ENCODE measurements at regions of chr2 and their contacts with region 1.

Region 1: DNA sequence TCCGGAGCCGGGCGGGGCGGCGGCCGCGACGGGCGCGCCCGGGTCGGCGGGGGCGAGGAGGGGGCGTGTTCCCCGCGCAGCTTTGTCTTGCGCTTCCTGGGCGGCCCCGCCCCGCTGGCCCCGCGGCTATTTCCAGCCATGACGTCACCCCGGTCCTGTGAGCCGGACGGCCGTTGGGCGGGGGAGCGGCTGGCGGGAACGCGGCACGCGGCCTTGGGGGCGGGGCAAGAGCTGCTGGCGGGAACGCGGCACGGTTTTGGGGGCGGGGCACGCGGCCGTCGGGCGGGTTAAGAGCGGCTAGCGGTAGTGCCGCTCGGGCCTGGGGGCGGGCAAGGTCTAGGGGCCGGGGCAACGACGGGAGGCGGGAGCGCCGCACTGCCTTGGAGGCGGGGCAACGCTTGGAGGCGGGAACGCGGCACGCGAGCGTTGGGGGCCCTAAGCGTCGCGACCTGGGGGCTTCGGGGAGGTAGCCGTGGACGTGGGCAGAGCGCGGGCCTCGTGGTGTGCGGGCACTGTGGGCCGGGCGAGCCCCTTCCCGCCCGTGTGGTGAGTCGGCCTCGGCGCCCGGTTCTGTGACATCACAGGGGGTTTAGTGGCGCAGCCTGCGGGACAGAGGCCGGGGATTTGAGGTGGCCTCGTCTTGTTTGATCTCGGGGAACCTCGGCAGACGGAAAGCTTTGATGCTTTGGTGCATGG is 704 bp downstream of the KLF11 start:
- DNase-seq: peak; percentile 88
- ATAC-seq: peak; percentile 68
- H3K4me3 Mint-ChIP-seq: peak overlapping the region; percentile 76
- H3K27ac Mint-ChIP-seq: peak overlapping the region; percentile 72
- H3K4me1 Mint-ChIP-seq: peaks cover 26% of the 10 kb centered on the region
- H3K27me3 Mint-ChIP-seq: no peaks in the 10 kb centered on the region
- CTCF ChIP-seq: no peak

Region 2: DNA sequence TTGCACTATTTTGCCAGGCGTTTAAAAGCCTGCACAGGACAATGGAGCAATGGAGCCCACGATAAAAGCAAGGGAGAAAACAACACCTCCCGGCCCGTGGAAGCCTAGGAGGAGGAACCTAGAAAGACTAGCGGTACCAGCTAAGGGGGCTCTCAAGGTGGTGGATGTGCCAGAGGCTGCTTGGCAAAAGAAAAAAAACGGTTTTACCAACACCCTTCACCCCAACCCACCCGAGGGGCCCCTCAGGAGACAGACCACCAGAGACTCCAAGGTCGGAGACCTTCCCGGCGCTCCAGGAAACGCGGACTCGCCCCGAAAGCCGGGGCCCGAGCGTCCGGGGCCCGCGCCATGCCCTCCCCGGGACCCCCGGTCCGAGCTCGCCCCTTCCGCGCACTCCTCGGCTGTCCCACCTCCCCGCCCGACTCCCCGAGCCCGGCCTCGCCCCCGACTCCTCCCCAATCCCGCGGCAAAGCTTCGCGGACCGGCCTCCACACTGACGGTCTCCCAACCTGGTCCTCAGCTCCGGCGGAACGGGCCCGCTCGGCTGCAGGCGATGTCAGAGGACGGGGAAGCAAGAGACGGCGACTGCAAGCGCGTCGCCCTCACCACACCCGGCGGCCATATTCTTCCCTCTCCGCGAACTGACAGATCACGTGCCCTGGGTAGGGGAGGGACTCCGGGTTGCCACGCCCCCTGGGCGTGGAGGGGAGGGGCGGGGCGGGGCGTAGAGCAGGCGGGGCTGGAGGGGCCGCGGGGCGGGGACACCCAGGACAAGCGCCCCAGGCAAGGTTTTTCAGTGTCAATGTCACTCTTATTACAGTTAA is 1206.9 kb before region 1 on chr2 and contains the start of gene KIDINS220:
- CTCF ChIA-PET with region 1: no interaction called
- POLR2A ChIA-PET with region 1: no interaction called
- intact Hi-C with region 1: loop called (anchors 5 kb)
- DNase-seq: peak; percentile 74
- ATAC-seq: peak; percentile 96
- H3K4me3 Mint-ChIP-seq: peak within 1 kb of the TSS; percentile 98
- H3K27ac Mint-ChIP-seq: peak within 1 kb of the TSS; percentile 96
- H3K4me1 Mint-ChIP-seq: peaks cover 40% of the 10 kb centered on the region
- H3K27me3 Mint-ChIP-seq: peaks cover 6% of the 10 kb centered on the region
- CTCF ChIP-seq: no peak
- total RNA-seq, gene KIDINS220: 26.4 and 26.9 TPM in 2 replicates

Region 3: DNA sequence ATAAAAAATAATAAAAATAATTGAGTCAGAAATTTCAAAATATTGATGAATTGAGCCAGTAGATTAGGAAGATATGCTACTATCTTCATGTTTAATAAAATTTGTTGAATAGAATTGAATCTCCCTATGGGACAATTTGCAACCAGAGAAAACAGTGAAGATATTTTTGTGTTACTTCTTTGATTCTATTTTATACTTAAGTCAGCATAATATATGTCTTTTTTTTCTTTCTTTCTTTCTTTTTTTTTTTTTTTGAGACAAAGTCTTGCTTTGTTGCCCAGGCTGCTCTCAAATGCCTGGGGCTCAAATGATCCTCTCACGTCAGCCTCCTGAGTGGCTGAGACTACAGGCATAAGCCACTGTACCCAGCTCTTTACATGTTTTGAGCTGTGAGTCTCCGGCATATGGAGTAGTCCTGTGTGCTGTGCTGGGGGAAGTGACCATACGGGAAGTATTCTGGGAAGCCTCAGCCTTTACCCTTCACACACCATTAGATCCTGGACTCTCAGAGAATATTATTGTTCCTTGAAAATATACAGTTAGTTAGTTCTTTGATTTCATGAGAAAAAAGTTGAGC is 583.5 kb before region 1 on chr2:
- CTCF ChIA-PET with region 1: no interaction called
- POLR2A ChIA-PET with region 1: no interaction called
- intact Hi-C with region 1: no loop called
- DNase-seq: no peak
- ATAC-seq: no peak
- H3K4me3 Mint-ChIP-seq: no peak overlapping the region
- H3K27ac Mint-ChIP-seq: no peak overlapping the region
- H3K4me1 Mint-ChIP-seq: no peaks in the 10 kb centered on the region
- H3K27me3 Mint-ChIP-seq: no peaks in the 10 kb centered on the region
- CTCF ChIP-seq: no peak

Region 4: GRCh38 chr2:9555297-9556141 is 488.5 kb before region 1 on chr2 and contains the start of gene ADAM17:
- CTCF ChIA-PET with region 1: no interaction called
- POLR2A ChIA-PET with region 1: no interaction called
- intact Hi-C with region 1: loop called (anchors 1 kb)
- DNase-seq: peak; percentile 92
- ATAC-seq: peak; percentile 90
- H3K4me3 Mint-ChIP-seq: peak within 1 kb of the TSS; percentile 96
- H3K27ac Mint-ChIP-seq: peak within 1 kb of the TSS; percentile 98
- H3K4me1 Mint-ChIP-seq: peaks cover 54% of the 10 kb centered on the region
- H3K27me3 Mint-ChIP-seq: no peaks in the 10 kb centered on the region
- CTCF ChIP-seq: no peak
- total RNA-seq, gene ADAM17: 34.3 and 39.5 TPM in 2 replicates

Region 5: GRCh38 chr2:9813312-9814133 is 230.5 kb before region 1 on chr2:
- CTCF ChIA-PET with region 1: interaction called, 69 read pairs
- POLR2A ChIA-PET with region 1: interaction called, 7 read pairs
- intact Hi-C with region 1: no loop called
- DNase-seq: peak; percentile 59
- ATAC-seq: peak; percentile 89
- H3K4me3 Mint-ChIP-seq: no peak overlapping the region
- H3K27ac Mint-ChIP-seq: no peak overlapping the region
- H3K4me1 Mint-ChIP-seq: peaks cover 9% of the 10 kb centered on the region
- H3K27me3 Mint-ChIP-seq: peaks cover 4% of the 10 kb centered on the region
- CTCF ChIP-seq: peak; percentile 95

Region 6: DNA sequence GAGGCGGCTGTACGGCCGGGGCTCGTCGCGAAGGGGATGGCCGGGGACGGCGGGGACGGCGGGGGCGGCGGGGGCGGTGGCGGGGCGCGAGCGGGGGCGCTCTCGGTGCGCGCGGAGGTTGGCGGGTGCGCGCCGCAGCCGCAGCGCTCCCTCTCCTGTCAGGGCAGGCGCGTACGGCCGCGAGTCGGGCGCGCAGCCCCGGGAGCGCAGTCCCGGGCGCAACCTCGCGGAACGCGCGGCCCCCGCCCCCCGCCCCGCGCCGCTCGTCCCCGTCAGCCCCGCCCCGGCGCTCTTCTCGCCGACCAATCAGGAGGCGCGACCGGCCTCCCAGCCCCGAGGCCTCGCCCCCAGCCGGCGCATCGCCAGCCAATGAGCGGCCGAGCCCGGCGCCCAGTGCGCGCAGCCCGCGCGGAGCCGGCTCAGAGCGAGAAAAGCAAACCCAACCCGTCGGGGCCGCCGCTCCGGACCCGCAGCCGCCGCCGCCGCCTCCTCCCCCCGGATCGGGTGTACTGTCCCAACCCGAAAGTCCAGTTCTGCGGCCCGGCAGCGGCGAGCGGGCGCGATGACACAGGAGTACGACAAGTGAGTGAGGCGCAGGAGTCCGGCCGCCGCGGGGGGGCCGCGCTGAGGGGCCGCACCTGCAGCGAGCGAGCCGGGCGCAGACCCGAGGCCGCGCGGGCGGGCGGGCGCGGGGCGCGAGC is 92.6 kb before region 1 on chr2 and contains the start of gene GRHL1:
- CTCF ChIA-PET with region 1: no interaction called
- POLR2A ChIA-PET with region 1: no interaction called
- intact Hi-C with region 1: loop called (anchors 1 kb)
- DNase-seq: peak; percentile 89
- ATAC-seq: peak; percentile 96
- H3K4me3 Mint-ChIP-seq: peak within 1 kb of the TSS; percentile 84
- H3K27ac Mint-ChIP-seq: peak within 1 kb of the TSS; percentile 65
- H3K4me1 Mint-ChIP-seq: peaks cover 14% of the 10 kb centered on the region
- H3K27me3 Mint-ChIP-seq: peaks cover 37% of the 10 kb centered on the region
- CTCF ChIP-seq: no peak
- total RNA-seq, gene GRHL1: 0.39 and 0.95 TPM in 2 replicates

Region 7: DNA sequence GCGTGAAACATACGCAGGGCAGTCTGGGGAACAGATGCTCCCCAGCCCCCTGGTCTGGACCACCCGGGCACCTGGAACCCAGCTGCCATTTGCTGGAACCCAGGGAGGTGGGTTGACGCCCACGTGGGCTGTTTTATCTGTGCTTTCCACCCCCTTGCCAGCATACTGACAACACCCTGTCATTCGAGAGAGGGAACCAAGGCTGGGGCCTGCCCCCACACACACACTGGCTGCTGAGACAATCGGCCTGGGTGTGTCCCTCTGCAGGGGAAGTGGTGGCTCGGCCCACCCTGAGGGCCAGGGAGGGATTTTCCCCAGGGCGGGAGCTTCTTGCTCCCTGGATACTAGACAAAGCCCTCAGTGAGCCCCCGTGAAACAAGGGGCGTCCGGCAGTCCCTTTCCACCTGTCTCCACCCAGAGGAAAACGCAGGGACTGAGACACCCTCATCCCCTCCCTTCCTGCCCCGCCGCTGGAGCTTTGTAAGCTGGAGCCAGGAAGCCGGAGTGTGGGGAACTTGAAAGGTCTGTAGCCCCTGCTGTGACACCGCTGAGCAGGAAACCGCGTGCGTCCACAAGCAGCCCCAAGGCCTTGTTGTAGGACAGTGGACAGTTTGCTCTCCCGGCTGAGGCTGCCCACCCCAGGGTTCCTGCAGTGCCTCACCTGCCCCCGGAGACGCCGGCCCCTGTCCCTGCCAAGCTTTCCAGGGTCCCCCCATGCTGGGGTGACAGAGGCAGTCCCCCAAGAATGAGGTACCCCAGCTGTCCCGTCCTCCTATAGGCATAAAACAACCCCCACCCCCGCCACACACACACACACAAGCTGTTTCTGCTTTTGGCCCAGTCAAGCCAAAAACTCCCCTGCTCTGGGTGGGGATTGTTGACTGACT is 14.8 kb before region 1 on chr2:
- CTCF ChIA-PET with region 1: interaction called, 16 read pairs
- POLR2A ChIA-PET with region 1: interaction called, 52 read pairs
- intact Hi-C with region 1: loop called (anchors 1 kb)
- DNase-seq: peak; percentile 49
- ATAC-seq: peak; percentile 99
- H3K4me3 Mint-ChIP-seq: peak overlapping the region; percentile 82
- H3K27ac Mint-ChIP-seq: peak overlapping the region; percentile 86
- H3K4me1 Mint-ChIP-seq: peaks cover 47% of the 10 kb centered on the region
- H3K27me3 Mint-ChIP-seq: no peaks in the 10 kb centered on the region
- CTCF ChIP-seq: no peak

Region 8: DNA sequence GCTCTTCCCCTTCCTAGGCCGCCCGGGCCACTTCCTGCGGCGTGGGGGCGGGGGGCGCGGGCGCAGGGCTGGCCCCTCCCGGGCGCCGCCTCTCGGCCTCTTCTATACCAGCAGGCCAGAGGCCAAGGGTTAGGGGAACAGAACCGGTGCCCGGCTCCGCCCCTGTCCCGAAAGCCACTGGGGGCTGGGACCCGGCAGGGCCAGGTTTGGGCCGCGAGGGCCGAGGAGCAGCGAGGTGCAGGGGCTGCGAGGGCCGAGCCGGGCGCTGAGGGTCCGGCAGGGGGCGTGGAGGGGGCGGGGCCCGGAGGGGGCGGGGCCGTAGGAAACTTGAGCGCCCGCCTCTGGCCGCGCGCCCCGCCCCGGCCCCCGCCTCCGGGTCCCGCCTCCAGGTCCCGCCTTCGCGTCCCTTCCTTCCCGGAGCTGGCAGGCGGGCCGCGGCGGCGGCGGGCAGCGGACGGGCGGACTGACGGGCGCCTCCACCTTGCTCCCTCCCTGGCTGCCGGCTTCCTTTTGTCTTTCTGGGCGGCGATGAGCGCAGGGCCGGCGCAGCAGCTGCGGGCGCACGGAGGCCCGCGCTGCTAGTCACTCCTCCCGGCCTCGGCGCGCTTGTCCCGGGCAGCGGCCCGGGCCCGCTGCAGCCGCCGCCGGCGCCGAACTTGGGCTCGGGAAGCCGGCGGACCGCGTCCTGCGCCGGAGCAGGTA is 258.6 kb after region 1 on chr2 and contains the start of gene HPCAL1:
- CTCF ChIA-PET with region 1: no interaction called
- POLR2A ChIA-PET with region 1: no interaction called
- intact Hi-C with region 1: loop called (anchors 2 kb)
- DNase-seq: peak; percentile 87
- ATAC-seq: peak; percentile 84
- H3K4me3 Mint-ChIP-seq: peak within 1 kb of the TSS; percentile 96
- H3K27ac Mint-ChIP-seq: peak within 1 kb of the TSS; percentile 80
- H3K4me1 Mint-ChIP-seq: peaks cover 58% of the 10 kb centered on the region
- H3K27me3 Mint-ChIP-seq: no peaks in the 10 kb centered on the region
- CTCF ChIP-seq: no peak
- total RNA-seq, gene HPCAL1: 15.2 and 15.9 TPM in 2 replicates

Region 9: GRCh38 chr2:10918661-10919409 is 874.8 kb after region 1 on chr2:
- CTCF ChIA-PET with region 1: no interaction called
- POLR2A ChIA-PET with region 1: no interaction called
- intact Hi-C with region 1: no loop called
- DNase-seq: no peak
- ATAC-seq: no peak
- H3K4me3 Mint-ChIP-seq: no peak overlapping the region
- H3K27ac Mint-ChIP-seq: no peak overlapping the region
- H3K4me1 Mint-ChIP-seq: no peaks in the 10 kb centered on the region
- H3K27me3 Mint-ChIP-seq: peaks cover 19% of the 10 kb centered on the region
- CTCF ChIP-seq: no peak

Region 10: DNA sequence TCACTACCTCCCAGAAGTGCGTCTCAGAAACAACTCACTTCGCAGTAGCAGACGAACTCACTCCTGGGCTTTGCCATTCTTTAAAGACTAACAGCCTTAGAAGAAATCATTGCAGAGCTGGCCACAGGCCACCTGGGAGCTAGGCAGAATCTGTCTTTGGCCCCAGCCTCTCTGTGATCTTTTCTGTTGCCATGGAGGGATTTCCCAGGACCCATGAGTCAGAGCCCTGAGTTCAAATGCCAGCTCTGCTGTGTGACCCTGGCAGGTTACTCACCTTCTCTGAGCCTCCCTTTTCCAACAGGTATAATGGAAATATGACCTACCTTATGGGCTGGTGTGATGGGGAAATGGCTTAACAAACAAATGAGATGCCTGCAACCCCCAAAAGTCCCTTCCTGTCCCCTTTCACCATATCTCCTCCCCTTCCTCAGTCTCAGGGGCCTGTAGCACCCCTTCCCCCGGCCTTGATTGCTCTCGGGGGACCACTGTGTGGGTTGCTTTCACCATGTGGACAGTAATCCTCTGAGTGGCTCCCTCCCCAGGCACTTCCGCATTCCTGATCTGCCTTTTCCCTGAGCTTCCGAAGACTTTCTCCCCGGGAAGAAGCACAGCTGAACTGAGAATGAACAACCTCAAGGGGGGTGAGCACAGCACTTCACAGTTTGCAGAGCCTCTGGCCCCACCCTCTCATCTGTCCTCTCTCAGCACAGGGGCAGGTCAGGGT is 1077.2 kb after region 1 on chr2:
- CTCF ChIA-PET with region 1: no interaction called
- POLR2A ChIA-PET with region 1: no interaction called
- intact Hi-C with region 1: no loop called
- DNase-seq: no peak
- ATAC-seq: no peak
- H3K4me3 Mint-ChIP-seq: no peak overlapping the region
- H3K27ac Mint-ChIP-seq: no peak overlapping the region
- H3K4me1 Mint-ChIP-seq: peaks cover 9% of the 10 kb centered on the region
- H3K27me3 Mint-ChIP-seq: peaks cover 7% of the 10 kb centered on the region
- CTCF ChIP-seq: no peak

Measured in activated B cell treated with CpG ODN at 0.5 μM for 24 hours (primary cell).